ENCODE measurements at regions of chr2 and their contacts with region 1.

Region 1: GRCh38 chr2:203673933-203674332 is 32.5 kb upstream of the CD28 start:
- DNase-seq: peak in 3 of 9 experiments; percentile 25 to 61 (median 36)
- ATAC-seq: no peak
- H3K4me3 ChIP-seq: no peak overlapping the region
- H3K4me3 Mint-ChIP-seq: no peak overlapping the region
- H3K27ac ChIP-seq: no peak overlapping the region
- H3K27ac Mint-ChIP-seq: no peak overlapping the region
- H3K4me1 ChIP-seq: peaks cover 8% of the 10 kb centered on the region
- H3K4me1 Mint-ChIP-seq: peaks cover 11% of the 10 kb centered on the region
- H3K27me3 ChIP-seq: no peaks in the 10 kb centered on the region
- H3K27me3 Mint-ChIP-seq: no peaks in the 10 kb centered on the region
- CTCF ChIP-seq: no peak

Region 2: GRCh38 chr2:203097735-203098134 is 576.2 kb before region 1 on chr2:
- CTCF ChIA-PET with region 1: no interaction called
- POLR2A ChIA-PET with region 1: no interaction called
- intact Hi-C with region 1: no loop called
- DNase-seq: peak in 2 of 9 experiments; percentile 7 to 16
- ATAC-seq: no peak
- H3K4me3 ChIP-seq: no peak overlapping the region
- H3K4me3 Mint-ChIP-seq: no peak overlapping the region
- H3K27ac ChIP-seq: no peak overlapping the region
- H3K27ac Mint-ChIP-seq: no peak overlapping the region
- H3K4me1 ChIP-seq: no peaks in the 10 kb centered on the region
- H3K4me1 Mint-ChIP-seq: no peaks in the 10 kb centered on the region
- H3K27me3 ChIP-seq: no peaks in the 10 kb centered on the region
- H3K27me3 Mint-ChIP-seq: no peaks in the 10 kb centered on the region
- CTCF ChIP-seq: peak; percentile 19

Region 3: DNA sequence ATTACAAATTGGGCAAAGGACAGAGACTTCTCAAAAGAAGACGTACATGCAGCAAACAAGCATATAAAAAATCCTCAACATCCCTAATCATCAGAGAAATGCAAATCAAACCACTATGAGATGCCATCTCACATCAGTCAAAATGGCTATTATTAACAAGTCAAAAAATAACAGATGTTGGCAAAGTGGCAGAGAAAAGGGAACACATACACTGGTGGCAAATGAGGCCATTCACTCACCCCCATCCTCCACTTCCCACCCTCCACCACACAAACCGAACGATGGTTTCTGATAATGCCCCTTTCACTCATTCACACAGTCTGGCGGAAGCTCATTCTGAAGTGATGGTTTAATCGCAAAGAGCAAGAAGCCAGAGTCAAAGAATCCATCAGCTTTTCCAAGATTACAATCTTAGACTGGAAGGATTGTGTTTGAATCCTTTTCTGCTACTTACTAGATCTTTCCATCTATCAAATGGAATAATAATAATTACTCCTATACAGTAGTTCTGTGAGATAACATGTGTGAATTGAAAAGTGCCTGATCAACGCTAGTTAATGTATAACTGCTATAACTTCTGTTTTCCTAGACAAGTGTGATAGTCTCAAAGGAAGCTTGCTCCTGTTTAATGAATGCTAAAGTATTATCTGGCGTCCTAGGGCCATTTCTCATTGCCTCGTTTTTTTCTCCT is 15.6 kb after region 1 on chr2:
- CTCF ChIA-PET with region 1: interaction called, 3 read pairs
- POLR2A ChIA-PET with region 1: no interaction called
- intact Hi-C with region 1: loop called in 1 of 2 experiments (anchors 2 kb)
- DNase-seq: peak in 4 of 9 experiments; percentile 12 to 68 (median 41)
- ATAC-seq: peak; percentile 57
- H3K4me3 ChIP-seq: no peak overlapping the region
- H3K4me3 Mint-ChIP-seq: peak overlapping the region; percentile 30
- H3K27ac ChIP-seq: no peak overlapping the region
- H3K27ac Mint-ChIP-seq: no peak overlapping the region
- H3K4me1 ChIP-seq: peaks cover 3% of the 10 kb centered on the region
- H3K4me1 Mint-ChIP-seq: peaks cover 23% of the 10 kb centered on the region
- H3K27me3 ChIP-seq: no peaks in the 10 kb centered on the region
- H3K27me3 Mint-ChIP-seq: no peaks in the 10 kb centered on the region
- CTCF ChIP-seq: no peak